Caco-2 (cell line): ENCODE measurements at regions of chr13 and their contacts with region 1.

Region 1: DNA sequence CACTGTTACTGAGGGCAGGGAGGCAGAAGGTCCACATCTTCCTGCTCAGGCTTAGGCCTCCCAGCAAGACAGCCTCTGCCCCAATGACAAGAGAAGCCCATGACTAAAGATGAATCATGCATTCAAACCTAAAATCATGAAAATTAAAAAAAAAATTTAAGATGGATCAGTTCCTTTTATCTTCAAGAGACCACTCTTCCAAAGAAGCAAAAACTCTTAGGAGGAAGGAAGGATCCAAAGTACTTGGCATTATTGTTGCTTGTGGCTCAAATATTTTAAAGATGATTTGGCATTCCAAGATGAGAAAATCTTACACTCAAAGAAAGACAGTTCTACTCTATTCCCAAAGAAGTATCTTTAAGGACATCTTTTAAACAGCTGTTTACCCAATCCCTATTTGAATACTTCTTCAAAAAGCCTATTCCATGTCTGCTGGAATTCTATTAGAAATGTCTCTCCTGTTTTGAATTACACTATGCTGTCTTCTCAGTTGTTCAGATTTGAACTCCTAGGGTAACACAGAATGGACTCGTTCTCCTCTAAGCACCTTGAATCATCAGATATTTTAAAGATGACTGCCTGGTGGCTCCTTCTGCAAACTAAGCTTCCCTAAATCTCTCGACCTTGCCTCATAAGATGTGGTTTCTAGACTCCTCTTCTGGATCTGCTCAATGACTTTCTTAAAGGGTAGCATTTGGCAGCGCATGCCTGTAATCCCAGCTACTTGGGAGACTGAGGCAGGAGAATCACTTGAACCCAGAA is 7.0 kb downstream of the SERP2 start:
- DNase-seq: no peak
- H3K4me3 ChIP-seq: no peak overlapping the region
- H3K4me3 Mint-ChIP-seq: no peak overlapping the region
- H3K27ac Mint-ChIP-seq: peak overlapping the region; percentile 85
- H3K4me1 ChIP-seq: peaks cover 62% of the 10 kb centered on the region
- H3K4me1 Mint-ChIP-seq: peaks cover 40% of the 10 kb centered on the region
- H3K27me3 ChIP-seq: no peaks in the 10 kb centered on the region
- H3K27me3 Mint-ChIP-seq: no peaks in the 10 kb centered on the region
- CTCF ChIP-seq: no peak

Region 2: GRCh38 chr13:44155422-44156293 is 224.9 kb before region 1 on chr13:
- CTCF ChIA-PET with region 1: no interaction called
- POLR2A ChIA-PET with region 1: no interaction called
- intact Hi-C with region 1: no loop called
- DNase-seq: no peak
- H3K4me3 ChIP-seq: no peak overlapping the region
- H3K4me3 Mint-ChIP-seq: peak overlapping the region; percentile 38
- H3K27ac Mint-ChIP-seq: no peak overlapping the region
- H3K4me1 ChIP-seq: peaks cover 12% of the 10 kb centered on the region; the same call in 1 of the 2 replicates
- H3K4me1 Mint-ChIP-seq: peaks cover 19% of the 10 kb centered on the region
- H3K27me3 ChIP-seq: no peaks in the 10 kb centered on the region
- H3K27me3 Mint-ChIP-seq: no peaks in the 10 kb centered on the region
- CTCF ChIP-seq: no peak

Region 3: DNA sequence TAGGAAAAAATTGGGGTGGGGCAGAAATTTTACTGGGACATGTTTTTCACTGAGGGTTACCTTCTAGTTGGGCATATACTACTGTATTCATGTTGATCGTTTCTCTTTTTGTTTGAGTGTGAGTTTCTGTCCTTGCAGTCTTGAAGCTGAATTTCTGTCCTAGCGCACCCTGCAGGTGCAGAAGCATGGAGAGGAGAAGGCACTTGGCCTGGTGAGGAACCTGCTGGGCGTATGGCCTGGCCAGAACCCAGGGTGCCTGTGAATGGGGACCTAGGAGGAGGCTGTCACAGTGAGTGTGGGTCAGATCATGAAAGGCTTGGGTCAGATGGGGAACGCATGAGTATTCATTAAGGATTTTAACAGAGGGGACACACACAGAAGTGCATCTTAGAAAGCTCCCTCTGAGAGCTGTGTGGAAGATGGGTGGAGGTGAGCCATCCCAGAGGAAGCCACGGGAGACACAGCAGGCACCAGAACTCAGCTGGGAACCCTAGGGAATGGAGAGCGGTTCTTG is 29.8 kb after region 1 on chr13:
- CTCF ChIA-PET with region 1: interaction called, 11 read pairs
- POLR2A ChIA-PET with region 1: no interaction called
- intact Hi-C with region 1: no loop called
- DNase-seq: no peak
- H3K4me3 ChIP-seq: no peak overlapping the region
- H3K4me3 Mint-ChIP-seq: no peak overlapping the region
- H3K27ac Mint-ChIP-seq: peak overlapping the region; percentile 40
- H3K4me1 ChIP-seq: peaks cover 9% of the 10 kb centered on the region
- H3K4me1 Mint-ChIP-seq: peaks cover 28% of the 10 kb centered on the region
- H3K27me3 ChIP-seq: no peaks in the 10 kb centered on the region
- H3K27me3 Mint-ChIP-seq: no peaks in the 10 kb centered on the region
- CTCF ChIP-seq: no peak